Psoas muscle (tissue), 8 donors: ENCODE measurements at regions of chr4 and their contacts with region 1.

Region 1: GRCh38 chr4:153684971-153685371 is 891 bp downstream of the TLR2 start:
- DNase-seq: no peak
- ATAC-seq: peak in 1 of 4 donors; percentile 13
- H3K4me3 ChIP-seq: peak overlapping the region; percentile 70
- H3K27ac ChIP-seq: no peak overlapping the region
- H3K4me1 ChIP-seq: peaks cover 3% of the 10 kb centered on the region
- H3K27me3 ChIP-seq: peaks cover 0 to 48% (median 12%) of the 10 kb centered on the region in 3 donors
- CTCF ChIP-seq: no peak

Region 2: DNA sequence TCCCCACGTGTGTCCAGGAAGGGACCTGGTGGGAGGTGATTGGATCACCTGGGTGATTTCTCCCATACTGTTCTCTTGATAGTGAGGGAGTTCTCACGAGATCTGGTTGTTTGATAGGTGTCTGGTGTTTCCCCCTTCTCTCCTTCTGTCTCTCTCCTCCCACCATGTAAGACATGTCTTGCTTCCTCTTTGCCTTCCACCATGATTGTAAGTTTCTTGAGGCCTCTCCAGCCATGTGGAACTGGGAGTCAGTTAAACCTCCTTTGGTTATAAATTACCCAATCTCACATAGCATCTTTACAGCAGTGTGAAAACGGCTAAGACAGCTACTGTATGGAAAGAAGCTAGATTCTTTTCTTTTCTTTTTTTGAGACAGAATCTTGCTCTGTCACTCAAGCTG is 949.1 kb after region 1 on chr4:
- intact Hi-C with region 1: loop called in 1 of 2 experiments (anchors 5 kb)
- DNase-seq: no peak
- ATAC-seq: no peak
- H3K4me3 ChIP-seq: no peak overlapping the region
- H3K27ac ChIP-seq: no peak overlapping the region
- H3K4me1 ChIP-seq: no peaks in the 10 kb centered on the region
- H3K27me3 ChIP-seq: peaks cover 0 to 7% (median 0%) of the 10 kb centered on the region in 3 donors
- CTCF ChIP-seq: no peak